ENCODE measurements at regions of chr5 and their contacts with region 1.

Region 1: GRCh38 chr5:33440482-33441240 is at the start of gene TARS1:
- DNase-seq: peak; percentile 80 to 94 (median 91)
- ATAC-seq: peak; percentile 94
- H3K4me3 ChIP-seq: peak within 1 kb of the TSS; percentile 96
- H3K4me3 Mint-ChIP-seq: no peak within 1 kb of the TSS
- H3K27ac ChIP-seq: peak within 1 kb of the TSS; percentile 90
- H3K27ac Mint-ChIP-seq: no peak within 1 kb of the TSS
- H3K4me1 ChIP-seq: peaks cover 15 to 16% of the 10 kb centered on the region in 2 donors
- H3K4me1 Mint-ChIP-seq: peaks cover 16 to 35% (median 29%) of the 10 kb centered on the region in 7 donors
- H3K27me3 ChIP-seq: no peaks in the 10 kb centered on the region
- H3K27me3 Mint-ChIP-seq: no peaks in the 10 kb centered on the region
- total RNA-seq, gene TARS1: 29.7 to 153 (median 87.0) TPM

Region 2: GRCh38 chr5:31531888-31532710 is 1908.6 kb before region 1 on chr5 and contains the starts of genes C5orf22 and DROSHA:
- CTCF ChIA-PET with region 1: no interaction called
- POLR2A ChIA-PET with region 1: no interaction called
- intact Hi-C with region 1: loop called (anchors 1 to 2 kb)
- DNase-seq: peak; percentile 72 to 90 (median 88)
- ATAC-seq: peak; percentile 99
- H3K4me3 ChIP-seq: peak within 1 kb of the TSS; percentile 97
- H3K4me3 Mint-ChIP-seq: peak within 1 kb of the TSS; percentile 93 to 100 (median 98)
- H3K27ac ChIP-seq: peak within 1 kb of the TSS; percentile 89
- H3K27ac Mint-ChIP-seq: peak within 1 kb of the TSS; percentile 83 to 96 (median 90)
- H3K4me1 ChIP-seq: peaks cover 13 to 24% of the 10 kb centered on the region in 2 donors
- H3K4me1 Mint-ChIP-seq: peaks cover 29 to 85% (median 73%) of the 10 kb centered on the region in 7 donors
- H3K27me3 ChIP-seq: no peaks in the 10 kb centered on the region
- H3K27me3 Mint-ChIP-seq: no peaks in the 10 kb centered on the region
- total RNA-seq, gene C5orf22: 10.6 to 31.3 (median 30.6) TPM
- total RNA-seq, gene DROSHA: 48.5 to 92.0 (median 75.7) TPM

Region 3: GRCh38 chr5:32444431-32445286 is 996.0 kb before region 1 on chr5 and contains the start of gene ZFR:
- CTCF ChIA-PET with region 1: no interaction called
- POLR2A ChIA-PET with region 1: no interaction called
- intact Hi-C with region 1: loop called (anchors 1 to 5 kb)
- DNase-seq: peak; percentile 91 to 95 (median 93)
- ATAC-seq: peak; percentile 95
- H3K4me3 ChIP-seq: peak within 1 kb of the TSS; percentile 67
- H3K4me3 Mint-ChIP-seq: peak within 1 kb of the TSS; percentile 79 to 94 (median 92)
- H3K27ac ChIP-seq: peak within 1 kb of the TSS; percentile 93
- H3K27ac Mint-ChIP-seq: peak within 1 kb of the TSS; percentile 75 to 96 (median 93)
- H3K4me1 ChIP-seq: peaks cover 16 to 20% of the 10 kb centered on the region in 2 donors
- H3K4me1 Mint-ChIP-seq: peaks cover 24 to 38% (median 33%) of the 10 kb centered on the region in 7 donors
- H3K27me3 ChIP-seq: no peaks in the 10 kb centered on the region
- H3K27me3 Mint-ChIP-seq: peaks cover 0 to 17% (median 0%) of the 10 kb centered on the region in 5 donors
- total RNA-seq, gene ZFR: 53.4 to 59.3 (median 58.0) TPM

Region 4: DNA sequence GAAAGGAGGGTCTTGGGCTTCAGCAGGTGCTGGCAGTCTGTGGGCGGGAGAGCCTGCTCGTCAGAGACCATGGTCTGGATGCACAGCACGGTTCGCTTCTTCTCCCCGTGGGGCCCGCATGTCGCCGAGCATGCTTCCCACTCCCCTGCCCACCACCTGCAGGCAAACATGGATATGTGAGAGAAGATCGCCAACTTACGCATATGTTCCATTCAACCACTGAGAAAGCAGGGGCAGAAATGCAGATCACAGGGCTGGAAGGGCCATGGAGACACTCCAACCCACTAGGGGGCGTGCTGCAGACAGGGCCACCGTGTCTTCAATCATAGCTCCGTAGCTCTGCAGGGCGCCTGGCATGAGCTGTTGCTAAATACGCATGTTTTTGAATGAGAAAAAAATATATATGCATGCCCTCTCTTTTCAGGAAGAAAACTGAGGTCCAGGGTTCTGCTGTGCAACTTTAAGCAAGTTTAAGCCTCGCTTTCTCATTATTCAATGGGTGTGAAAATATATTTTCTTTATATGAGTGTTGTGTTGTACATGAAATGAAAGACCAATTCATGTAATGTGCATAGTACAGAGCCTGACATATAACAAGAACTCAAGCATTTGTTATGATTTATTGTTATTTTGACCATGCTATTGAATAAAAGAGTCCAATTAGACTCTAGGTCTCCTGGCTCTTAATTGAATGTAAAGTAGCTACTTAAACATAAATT is 148.2 kb after region 1 on chr5:
- CTCF ChIA-PET with region 1: no interaction called
- POLR2A ChIA-PET with region 1: no interaction called
- intact Hi-C with region 1: loop called (anchors 1 to 2 kb)
- DNase-seq: peak in 8 of 9 donors; percentile 0 to 40 (median 10)
- ATAC-seq: no peak
- H3K4me3 ChIP-seq: no peak overlapping the region
- H3K4me3 Mint-ChIP-seq: no peak overlapping the region
- H3K27ac ChIP-seq: no peak overlapping the region
- H3K27ac Mint-ChIP-seq: no peak overlapping the region
- H3K4me1 ChIP-seq: no peaks in the 10 kb centered on the region
- H3K4me1 Mint-ChIP-seq: peaks cover 0 to 1% (median 0%) of the 10 kb centered on the region in 7 donors
- H3K27me3 ChIP-seq: no peaks in the 10 kb centered on the region
- H3K27me3 Mint-ChIP-seq: peaks cover 0 to 5% (median 4%) of the 10 kb centered on the region in 5 donors

Region 5: GRCh38 chr5:33936004-33936380 is 495.3 kb after region 1 on chr5:
- CTCF ChIA-PET with region 1: interaction called, 14 read pairs
- POLR2A ChIA-PET with region 1: no interaction called
- intact Hi-C with region 1: loop called (anchors 1 kb)
- DNase-seq: peak; percentile 10 to 59 (median 20)
- ATAC-seq: peak; percentile 54
- H3K4me3 ChIP-seq: no peak overlapping the region
- H3K4me3 Mint-ChIP-seq: peak overlapping the region in 5 of 10 donors; percentile 38 to 53 (median 46)
- H3K27ac ChIP-seq: no peak overlapping the region
- H3K27ac Mint-ChIP-seq: peak overlapping the region in 1 of 9 donors; percentile 50
- H3K4me1 ChIP-seq: no peaks in the 10 kb centered on the region
- H3K4me1 Mint-ChIP-seq: peaks cover 0 to 4% (median 0%) of the 10 kb centered on the region in 7 donors
- H3K27me3 ChIP-seq: peaks cover 0 to 10% of the 10 kb centered on the region in 2 donors
- H3K27me3 Mint-ChIP-seq: peaks cover 64 to 81% (median 65%) of the 10 kb centered on the region in 5 donors

Region 6: GRCh38 chr5:34464830-34465229 is 1024.2 kb after region 1 on chr5:
- CTCF ChIA-PET with region 1: interaction called, 3 read pairs
- POLR2A ChIA-PET with region 1: no interaction called
- intact Hi-C with region 1: loop called (anchors 1 to 5 kb)
- DNase-seq: no peak
- ATAC-seq: no peak
- H3K4me3 ChIP-seq: no peak overlapping the region
- H3K4me3 Mint-ChIP-seq: no peak overlapping the region
- H3K27ac ChIP-seq: no peak overlapping the region
- H3K27ac Mint-ChIP-seq: no peak overlapping the region
- H3K4me1 ChIP-seq: no peaks in the 10 kb centered on the region
- H3K4me1 Mint-ChIP-seq: peaks cover 0 to 16% (median 0%) of the 10 kb centered on the region in 7 donors
- H3K27me3 ChIP-seq: no peaks in the 10 kb centered on the region
- H3K27me3 Mint-ChIP-seq: peaks cover 0 to 34% (median 8%) of the 10 kb centered on the region in 5 donors

Region 7: DNA sequence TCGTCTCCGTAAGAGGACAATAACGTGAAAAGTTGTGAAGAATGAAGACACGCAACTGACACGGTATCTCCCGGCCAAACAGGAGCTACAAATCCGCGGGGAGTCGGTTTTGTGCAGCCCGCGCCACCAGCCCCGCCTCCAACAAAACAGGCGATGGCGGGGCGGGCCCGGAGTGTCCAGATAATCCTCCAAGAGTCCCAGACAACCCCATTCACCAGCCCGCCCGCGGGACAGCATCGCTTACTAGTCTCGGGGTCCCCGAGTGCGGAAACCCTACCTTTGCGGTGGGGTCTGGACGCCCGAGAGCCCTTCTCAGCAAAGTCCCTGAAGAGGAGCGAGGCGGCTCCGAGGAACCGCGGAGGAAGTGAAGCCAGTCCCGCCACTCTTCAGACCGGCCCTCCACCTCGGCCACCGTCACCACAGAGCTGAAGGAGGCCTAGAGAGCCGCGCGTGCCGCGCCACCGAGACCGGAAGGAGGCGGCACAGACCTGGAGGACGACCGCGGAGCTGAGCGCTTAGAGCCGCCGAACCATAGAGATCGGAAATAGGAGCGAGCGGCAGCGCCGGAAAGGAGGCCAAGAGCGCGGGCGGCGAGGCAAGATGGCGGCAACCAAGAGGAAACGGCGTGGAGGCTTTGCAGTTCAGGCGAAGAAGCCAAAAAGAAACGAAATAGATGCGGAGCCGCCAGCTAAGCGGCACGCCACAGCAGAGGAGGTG is 1474.6 kb after region 1 on chr5 and contains the starts of genes BRIX1 and RAD1:
- CTCF ChIA-PET with region 1: no interaction called
- POLR2A ChIA-PET with region 1: no interaction called
- intact Hi-C with region 1: loop called in 1 of 2 experiments (anchors 1 kb)
- DNase-seq: peak; percentile 86 to 95 (median 92)
- ATAC-seq: peak; percentile 99
- H3K4me3 ChIP-seq: peak within 1 kb of the TSS; percentile 99
- H3K4me3 Mint-ChIP-seq: peak within 1 kb of the TSS in 3 of 10 donors; percentile 56 to 80 (median 60)
- H3K27ac ChIP-seq: peak within 1 kb of the TSS; percentile 84
- H3K27ac Mint-ChIP-seq: peak within 1 kb of the TSS in 2 of 9 donors; percentile 59 to 69
- H3K4me1 ChIP-seq: peaks cover 19 to 34% of the 10 kb centered on the region in 2 donors
- H3K4me1 Mint-ChIP-seq: peaks cover 17 to 41% (median 35%) of the 10 kb centered on the region in 7 donors
- H3K27me3 ChIP-seq: no peaks in the 10 kb centered on the region
- H3K27me3 Mint-ChIP-seq: no peaks in the 10 kb centered on the region
- total RNA-seq, gene BRIX1: 13.4 to 45.2 (median 26.8) TPM
- total RNA-seq, gene RAD1: 19.3 to 29.6 (median 24.6) TPM